Caco-2 (cell line): ENCODE measurements at regions of chr12 and their contacts with region 1.

Region 1: DNA sequence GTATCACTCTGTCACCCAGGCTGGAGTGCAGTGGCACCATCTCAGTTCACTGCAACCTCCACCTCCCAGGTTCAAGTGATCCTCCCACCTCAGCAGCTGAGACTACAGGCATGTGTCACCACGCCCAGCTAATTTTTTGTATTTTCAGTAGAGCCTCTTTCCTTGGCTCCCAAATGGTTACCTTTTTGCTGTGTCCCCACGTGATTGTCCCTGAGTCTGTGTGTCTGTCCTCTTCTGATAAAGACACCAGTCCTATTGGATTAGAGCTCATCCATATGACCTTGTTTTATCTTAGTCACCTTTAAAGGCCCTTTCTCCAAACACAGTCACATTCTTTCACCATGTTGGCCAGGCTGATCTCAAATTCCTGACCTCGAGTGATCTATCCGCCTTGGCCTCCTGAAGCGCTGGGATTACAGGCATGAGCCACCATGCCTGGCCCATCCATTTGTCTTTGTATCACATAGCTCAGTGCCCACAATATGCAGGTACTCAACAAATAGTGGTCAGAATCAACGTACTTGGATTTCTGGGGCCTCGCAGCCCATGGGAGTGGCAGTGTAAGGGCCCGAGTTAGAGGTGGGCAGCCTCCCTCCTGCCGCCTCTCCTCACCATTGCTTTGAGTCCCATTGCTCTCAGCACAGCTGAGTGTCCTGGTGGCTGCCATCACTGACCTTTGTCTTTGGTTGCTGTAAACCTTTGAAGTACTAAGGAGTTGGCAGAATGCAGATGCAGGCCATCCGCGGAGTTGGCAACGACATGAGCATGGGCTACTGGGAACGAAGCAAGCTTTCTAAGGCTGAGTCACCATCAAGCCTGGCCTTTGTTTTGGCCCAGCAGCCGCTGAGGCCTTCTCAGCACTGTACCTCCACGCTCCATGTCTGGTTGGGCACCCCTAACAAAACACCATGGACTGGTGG is 9.3 kb downstream of the TPCN1 start:
- DNase-seq: peak; percentile 79 to 85
- H3K4me3 ChIP-seq: no peak overlapping the region
- H3K4me3 Mint-ChIP-seq: peak overlapping the region; percentile 47
- H3K27ac Mint-ChIP-seq: peak overlapping the region; percentile 95
- H3K4me1 ChIP-seq: peaks cover 64% of the 10 kb centered on the region
- H3K4me1 Mint-ChIP-seq: peaks cover 38% of the 10 kb centered on the region
- H3K27me3 ChIP-seq: no peaks in the 10 kb centered on the region
- H3K27me3 Mint-ChIP-seq: no peaks in the 10 kb centered on the region
- CTCF ChIP-seq: no peak

Region 2: GRCh38 chr12:113184900-113185773 is 45.4 kb before region 1 on chr12 and contains the starts of genes DDX54 and RITA1:
- CTCF ChIA-PET with region 1: no interaction called
- POLR2A ChIA-PET with region 1: interaction called, 11 read pairs
- intact Hi-C with region 1: no loop called
- DNase-seq: peak; percentile 90 to 94
- H3K4me3 ChIP-seq: peak within 1 kb of the TSS; percentile 93
- H3K4me3 Mint-ChIP-seq: peak within 1 kb of the TSS; percentile 87
- H3K27ac Mint-ChIP-seq: peak within 1 kb of the TSS; percentile 88
- H3K4me1 ChIP-seq: no peaks in the 10 kb centered on the region
- H3K4me1 Mint-ChIP-seq: peaks cover 16% of the 10 kb centered on the region
- H3K27me3 ChIP-seq: no peaks in the 10 kb centered on the region
- H3K27me3 Mint-ChIP-seq: no peaks in the 10 kb centered on the region
- CTCF ChIP-seq: no peak
- total RNA-seq, gene DDX54: 101 and 110 TPM in 2 replicates
- total RNA-seq, gene RITA1: 32.7 and 33.6 TPM in 2 replicates

Region 3: DNA sequence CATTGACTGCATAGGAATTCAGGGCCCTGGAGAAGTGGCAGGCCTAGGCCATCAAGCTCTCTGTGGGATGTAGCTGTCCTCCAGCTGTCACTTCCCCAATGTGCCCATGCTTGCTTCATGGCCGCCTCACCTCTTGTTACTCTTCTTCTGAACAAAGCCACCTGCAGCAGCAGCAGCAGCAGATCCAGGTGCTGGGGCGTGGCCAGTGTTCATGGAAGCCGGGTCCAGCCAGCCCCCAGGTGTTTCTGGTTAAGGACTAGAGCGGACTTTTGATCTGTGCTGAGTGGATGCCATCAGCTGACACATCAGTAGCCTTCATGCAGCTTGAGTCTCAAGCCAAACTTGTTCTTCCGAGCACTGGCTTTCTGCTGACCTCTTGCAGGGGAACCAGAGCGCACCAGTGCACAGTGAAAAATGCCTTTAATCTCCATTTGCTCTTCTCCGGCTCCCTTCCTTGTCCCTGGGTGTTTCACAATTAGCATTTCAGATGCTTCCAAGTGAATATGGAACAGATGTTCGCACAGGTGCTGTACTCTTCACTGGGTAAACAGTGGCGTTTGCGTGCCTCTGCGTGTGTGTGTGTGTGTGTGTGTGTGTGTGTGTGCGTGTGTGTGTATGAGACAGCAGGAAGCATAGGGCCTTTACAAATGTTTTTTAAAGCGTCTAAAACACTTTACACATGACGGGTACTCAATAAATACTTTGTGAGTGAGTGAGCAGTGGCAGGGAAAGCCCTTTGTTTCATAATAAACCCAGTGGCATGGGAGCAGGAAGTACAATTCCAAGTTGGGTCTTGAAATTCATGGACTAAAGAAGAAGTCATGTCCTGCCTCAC is 10.8 kb after region 1 on chr12:
- CTCF ChIA-PET with region 1: interaction called, 9 read pairs
- POLR2A ChIA-PET with region 1: interaction called, 37 read pairs
- intact Hi-C with region 1: loop called (anchors 1 kb)
- DNase-seq: peak; percentile 82 to 87
- H3K4me3 ChIP-seq: no peak overlapping the region
- H3K4me3 Mint-ChIP-seq: peak overlapping the region; percentile 12
- H3K27ac Mint-ChIP-seq: peak overlapping the region; percentile 93
- H3K4me1 ChIP-seq: peaks cover 53% of the 10 kb centered on the region
- H3K4me1 Mint-ChIP-seq: peaks cover 48% of the 10 kb centered on the region
- H3K27me3 ChIP-seq: no peaks in the 10 kb centered on the region
- H3K27me3 Mint-ChIP-seq: no peaks in the 10 kb centered on the region
- CTCF ChIP-seq: no peak

Region 4: DNA sequence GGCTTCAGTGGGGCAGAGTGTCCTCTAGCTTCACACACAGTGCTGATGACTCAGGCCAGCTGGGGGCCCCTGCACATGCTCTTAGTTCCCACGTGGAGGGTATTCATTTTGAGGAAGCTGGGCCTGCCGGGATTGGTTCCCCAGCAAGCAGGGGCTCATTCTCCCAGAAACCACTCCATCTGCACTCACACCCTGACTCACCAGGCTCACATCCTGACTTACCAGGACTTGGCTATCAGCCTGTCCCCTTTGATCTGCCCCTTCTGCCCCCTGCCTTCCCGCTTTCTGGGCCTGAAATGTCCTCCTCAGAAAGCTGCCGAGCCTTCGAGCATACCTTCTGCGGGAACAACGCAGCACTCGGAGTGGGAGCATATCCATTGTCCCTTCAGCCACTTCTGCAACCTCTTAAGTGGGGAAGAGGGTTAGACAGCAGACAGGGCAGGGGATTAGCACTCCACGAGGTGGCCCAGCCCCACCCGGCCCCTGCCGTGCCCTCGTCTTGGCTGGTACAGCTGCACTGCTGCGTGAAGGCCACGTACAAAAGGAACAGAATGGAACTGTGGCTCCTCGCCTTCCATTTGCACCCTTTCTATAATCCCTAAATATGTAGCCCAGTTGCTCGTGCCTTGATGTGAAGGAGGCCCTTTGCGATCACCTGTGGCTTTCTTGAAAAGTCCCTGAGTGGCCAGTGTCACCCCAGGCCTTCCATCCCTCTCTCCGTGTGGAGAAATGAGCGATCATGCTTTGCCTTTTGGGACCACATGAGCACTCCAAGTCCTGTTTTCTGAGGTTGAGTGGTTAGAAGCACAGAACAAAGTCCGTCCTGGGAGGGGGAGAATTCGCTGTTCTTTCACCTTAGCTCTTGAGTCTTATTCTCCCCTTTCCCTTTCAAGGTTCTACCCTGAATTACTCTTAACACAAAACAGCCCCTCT is 16.8 kb after region 1 on chr12:
- CTCF ChIA-PET with region 1: interaction called, 9 read pairs
- POLR2A ChIA-PET with region 1: interaction called, 37 read pairs
- intact Hi-C with region 1: loop called (anchors 1 kb)
- DNase-seq: no peak
- H3K4me3 ChIP-seq: no peak overlapping the region
- H3K4me3 Mint-ChIP-seq: no peak overlapping the region
- H3K27ac Mint-ChIP-seq: peak overlapping the region; percentile 99
- H3K4me1 ChIP-seq: peaks cover 30% of the 10 kb centered on the region
- H3K4me1 Mint-ChIP-seq: peaks cover 49% of the 10 kb centered on the region
- H3K27me3 ChIP-seq: no peaks in the 10 kb centered on the region
- H3K27me3 Mint-ChIP-seq: no peaks in the 10 kb centered on the region
- CTCF ChIP-seq: no peak